ENCODE measurements at regions of chr6 and their contacts with region 1.

Region 1: DNA sequence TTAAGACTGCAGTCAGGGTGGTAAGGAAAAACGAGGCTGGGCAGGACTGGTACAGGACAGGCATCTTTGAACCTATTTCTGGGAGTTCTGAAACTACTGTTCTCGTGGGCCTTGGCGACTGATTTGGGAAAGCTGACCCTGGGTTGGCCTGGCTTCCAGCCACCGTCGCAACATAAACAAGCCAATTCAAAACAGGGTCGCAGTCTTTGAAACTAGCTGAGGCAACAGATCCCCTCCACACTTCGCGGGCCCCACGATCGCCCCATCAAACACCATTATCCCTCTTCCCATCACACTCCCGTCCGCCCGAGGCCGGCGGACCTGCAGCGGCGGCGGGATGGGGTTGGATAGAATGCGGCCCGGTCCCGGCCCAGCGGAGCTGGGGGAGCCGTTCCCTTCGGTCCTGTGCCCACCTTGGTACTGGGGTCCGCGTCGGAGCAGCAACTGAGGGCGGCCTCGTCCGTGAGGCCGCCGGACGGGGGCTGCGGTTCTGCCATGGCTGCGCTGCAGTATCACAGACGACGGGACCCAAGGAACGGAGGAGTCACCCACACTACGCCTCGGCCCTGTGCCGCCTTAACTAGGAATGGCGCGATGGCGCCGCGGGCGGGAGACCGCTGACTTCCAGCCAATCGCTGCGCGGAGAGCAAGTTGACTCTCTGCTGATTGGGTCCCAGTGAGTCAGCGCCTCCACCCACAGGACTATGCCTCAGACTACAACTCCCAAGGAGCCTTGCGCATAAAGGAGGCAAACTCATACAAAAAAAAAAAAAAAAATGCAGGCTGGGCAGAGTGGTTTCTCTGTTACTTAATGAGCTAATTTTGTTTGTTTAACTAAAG is at the start of gene GLO1:
- DNase-seq: peak; percentile 88 to 97 (median 94)
- ATAC-seq: peak; percentile 99
- H3K4me3 Mint-ChIP-seq: peak within 1 kb of the TSS; percentile 79 to 95 (median 92)
- H3K27ac Mint-ChIP-seq: peak within 1 kb of the TSS; percentile 80 to 95 (median 94)
- H3K4me1 Mint-ChIP-seq: peaks cover 15 to 25% (median 21%) of the 10 kb centered on the region in 4 donors
- H3K27me3 Mint-ChIP-seq: peaks cover 2 to 24% (median 10%) of the 10 kb centered on the region in 5 donors
- polyA plus RNA-seq, gene GLO1: 74.1 to 103 (median 80.1) TPM

Region 2: GRCh38 chr6:38639498-38640215 is 63.1 kb before region 1 on chr6 and contains the start of gene BTBD9:
- POLR2A ChIA-PET with region 1: interaction called, 15 read pairs
- DNase-seq: peak; percentile 75 to 92 (median 88)
- ATAC-seq: peak; percentile 79 to 85
- H3K4me3 Mint-ChIP-seq: peak within 1 kb of the TSS; percentile 79 to 95 (median 92)
- H3K27ac Mint-ChIP-seq: peak within 1 kb of the TSS; percentile 88 to 99 (median 96)
- H3K4me1 Mint-ChIP-seq: peaks cover 33 to 64% (median 58%) of the 10 kb centered on the region in 4 donors
- H3K27me3 Mint-ChIP-seq: no peaks in the 10 kb centered on the region
- polyA plus RNA-seq, gene BTBD9: 9.3 to 10.6 (median 10.4) TPM